Dorsolateral prefrontal cortex (tissue), 120 donors: ENCODE measurements at regions of chr2 and their contacts with region 1.

Region 1: GRCh38 chr2:197378494-197379307 is 56.1 kb downstream of the SF3B1 start:
- DNase-seq: peak in 7 of 10 donors; percentile 25 to 73 (median 35)
- H3K4me3 ChIP-seq: peak overlapping the region in 56 of 59 donors; percentile 3 to 59 (median 38)
- H3K27ac ChIP-seq: no peak overlapping the region
- H3K27me3 ChIP-seq: no peaks in the 10 kb centered on the region
- CTCF ChIP-seq: peak; percentile 41 to 94 (median 85)

Region 2: GRCh38 chr2:196849895-196850294 is 528.8 kb before region 1 on chr2:
- intact Hi-C with region 1: loop called in 1 of 2 experiments (anchors 5 kb)
- DNase-seq: peak in 2 of 10 donors; percentile 10 to 32
- H3K4me3 ChIP-seq: no peak overlapping the region
- H3K27ac ChIP-seq: peak overlapping the region in 1 of 59 donors; percentile 39
- H3K27me3 ChIP-seq: no peaks in the 10 kb centered on the region
- CTCF ChIP-seq: peak in 51 of 56 donors; percentile 18 to 74 (median 48)

Region 3: DNA sequence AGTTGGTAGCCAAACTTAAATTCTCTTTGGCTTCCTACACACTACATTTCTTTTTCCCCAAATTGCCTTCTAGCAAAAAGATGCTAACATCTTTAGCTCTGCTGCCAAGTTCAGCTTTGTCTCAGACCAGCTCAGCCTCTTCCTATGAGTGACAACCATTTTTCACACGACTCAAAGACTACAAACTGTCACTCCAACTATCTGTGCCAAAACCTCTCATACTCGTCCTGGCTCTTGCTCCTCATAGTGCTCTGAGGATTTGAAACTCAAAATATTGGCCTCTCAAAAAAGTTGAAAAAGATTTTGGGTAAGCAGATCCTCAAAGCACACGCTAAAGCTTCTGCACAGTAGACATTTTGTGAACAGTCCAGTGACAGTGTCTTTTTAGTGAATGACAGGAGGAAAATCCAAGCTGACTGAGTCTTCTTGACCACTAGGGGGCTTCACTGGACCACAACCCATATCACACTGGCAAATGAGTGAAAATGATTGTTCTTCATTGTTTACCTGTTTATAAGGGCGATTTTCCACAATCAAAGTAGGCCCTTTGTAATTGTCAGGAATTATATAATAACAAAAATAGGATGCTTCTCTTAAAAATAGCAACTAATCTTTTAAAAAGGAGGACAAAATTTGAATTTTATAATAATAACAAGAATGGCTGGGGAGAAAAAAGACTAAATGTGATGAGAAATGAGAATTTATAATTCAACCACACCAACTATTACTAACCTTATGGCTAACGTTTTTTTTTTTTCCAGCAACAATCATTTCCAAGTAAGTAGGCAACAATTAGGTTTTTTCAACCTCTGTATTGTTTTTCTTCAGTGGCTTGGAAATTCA is 366.7 kb before region 1 on chr2:
- intact Hi-C with region 1: loop called in 1 of 2 experiments (anchors 10 kb)
- DNase-seq: peak in 4 of 10 donors; percentile 31 to 50 (median 41)
- H3K4me3 ChIP-seq: peak overlapping the region in 5 of 59 donors; percentile 2 to 41 (median 9)
- H3K27ac ChIP-seq: peak overlapping the region in 51 of 59 donors; percentile 1 to 82 (median 64)
- H3K27me3 ChIP-seq: no peaks in the 10 kb centered on the region
- CTCF ChIP-seq: peak; percentile 61 to 97 (median 90)

Region 4: GRCh38 chr2:197191177-197191939 is 187.3 kb before region 1 on chr2:
- intact Hi-C with region 1: loop called (anchors 5 kb)
- DNase-seq: no peak
- H3K4me3 ChIP-seq: no peak overlapping the region
- H3K27ac ChIP-seq: peak overlapping the region in 1 of 59 donors; percentile 6
- H3K27me3 ChIP-seq: no peaks in the 10 kb centered on the region
- CTCF ChIP-seq: peak; percentile 65 to 88 (median 77)

Region 5: GRCh38 chr2:197416268-197416667 is 37.6 kb after region 1 on chr2:
- intact Hi-C with region 1: loop called in 1 of 2 experiments (anchors 2 kb)
- DNase-seq: no peak
- H3K4me3 ChIP-seq: no peak overlapping the region
- H3K27ac ChIP-seq: no peak overlapping the region
- H3K27me3 ChIP-seq: no peaks in the 10 kb centered on the region
- CTCF ChIP-seq: no peak

Region 6: DNA sequence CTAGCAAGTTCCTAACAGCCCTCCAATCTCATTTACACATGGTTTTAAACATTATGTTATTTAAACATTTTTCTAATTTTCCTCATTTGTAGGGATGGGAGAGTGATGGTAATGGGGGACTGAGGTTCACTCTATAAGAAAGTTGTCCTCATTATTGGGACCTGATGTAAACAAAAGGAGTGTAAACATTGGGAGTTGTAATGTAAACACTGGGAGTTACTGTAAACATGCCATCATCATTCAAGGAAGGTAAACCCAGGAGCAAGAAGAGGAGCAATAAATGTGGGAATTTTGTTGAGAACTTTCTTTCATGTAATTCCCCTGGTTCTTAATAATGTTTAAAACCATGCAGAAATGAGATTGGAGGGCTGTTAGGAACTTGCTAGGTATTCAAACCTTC is 278.9 kb after region 1 on chr2:
- intact Hi-C with region 1: no loop called
- DNase-seq: no peak
- H3K4me3 ChIP-seq: no peak overlapping the region
- H3K27ac ChIP-seq: peak overlapping the region in 12 of 59 donors; percentile 1 to 61 (median 29)
- H3K27me3 ChIP-seq: no peaks in the 10 kb centered on the region
- CTCF ChIP-seq: no peak